IMR-90 (cell line): ENCODE measurements at regions of chr19 and their contacts with region 1.

Region 1: DNA sequence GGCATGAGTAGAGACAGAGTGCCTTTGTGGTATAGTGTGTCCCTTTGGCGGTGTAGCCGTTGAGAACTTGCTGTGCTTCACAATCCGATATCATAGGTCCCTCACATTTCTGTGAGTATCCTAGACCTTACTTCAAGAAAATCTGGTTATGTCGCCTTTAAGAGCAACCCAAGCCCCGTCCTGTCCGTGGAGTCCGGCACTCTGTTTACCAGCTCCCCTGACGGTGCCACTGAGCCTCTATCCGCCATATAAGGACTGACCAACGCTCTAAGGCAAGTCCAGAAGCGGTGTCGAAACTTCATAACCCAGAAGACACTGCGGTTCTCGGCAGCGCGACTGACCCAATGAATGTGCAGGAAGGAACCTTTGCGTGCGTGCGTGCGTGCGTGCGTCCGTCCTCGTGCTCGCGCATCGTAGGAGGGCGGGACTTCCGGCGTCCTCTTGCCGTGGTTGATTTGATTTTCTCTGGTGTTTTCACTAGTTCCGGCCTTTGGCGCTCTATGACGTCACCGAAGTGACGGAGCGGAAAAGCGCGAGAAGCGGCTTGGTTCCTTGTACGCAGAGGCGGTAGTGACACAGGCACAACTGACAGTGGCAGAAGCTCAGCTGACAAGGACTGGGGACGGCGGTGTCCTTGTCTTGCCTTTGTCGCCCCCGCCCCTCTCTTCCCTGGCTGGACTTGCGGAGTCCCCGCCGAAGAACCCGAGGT is at the starts of genes TRAPPC2B and ZNF547:
- DNase-seq: peak; percentile 100
- ATAC-seq: peak; percentile 97
- H3K4me3 ChIP-seq: peak within 1 kb of the TSS; percentile 61
- H3K27ac ChIP-seq: peak within 1 kb of the TSS; percentile 76
- H3K4me1 ChIP-seq: no peaks in the 10 kb centered on the region
- H3K27me3 ChIP-seq: no peaks in the 10 kb centered on the region
- CTCF ChIP-seq: no peak
- POLR2A ChIP-seq: peak; percentile 88
- RAD21 ChIP-seq: no peak
- total RNA-seq, gene TRAPPC2B: 14.4 and 20.4 TPM in 2 replicates
- total RNA-seq, gene ZNF547: 4.4 and 5.6 TPM in 2 replicates

Region 2: GRCh38 chr19:57320180-57321084 is 42.7 kb before region 1 on chr19 and contains the start of gene ZNF543:
- CTCF ChIA-PET with region 1: no interaction called
- POLR2A ChIA-PET with region 1: no interaction called
- dilution Hi-C with region 1: no loop called
- in situ Hi-C with region 1: no loop called
- intact Hi-C with region 1: loop called (anchors 1 kb)
- DNase-seq: peak; percentile 95
- ATAC-seq: peak; percentile 99
- H3K4me3 ChIP-seq: peak within 1 kb of the TSS; percentile 78
- H3K27ac ChIP-seq: peak within 1 kb of the TSS; percentile 87
- H3K4me1 ChIP-seq: peaks cover 11% of the 10 kb centered on the region
- H3K27me3 ChIP-seq: peaks cover 10% of the 10 kb centered on the region
- CTCF ChIP-seq: no peak
- POLR2A ChIP-seq: peak; percentile 74; the same call in 1 of the 2 replicates
- RAD21 ChIP-seq: peak; percentile 12; the same call in 1 of the 2 replicates
- total RNA-seq, gene ZNF543: 8.3 and 9.0 TPM in 2 replicates

Region 3: GRCh38 chr19:57759096-57759495 is 395.9 kb after region 1 on chr19:
- CTCF ChIA-PET with region 1: no interaction called
- POLR2A ChIA-PET with region 1: interaction called, 11 read pairs
- dilution Hi-C with region 1: no loop called
- in situ Hi-C with region 1: no loop called
- intact Hi-C with region 1: no loop called
- DNase-seq: no peak
- ATAC-seq: no peak
- H3K4me3 ChIP-seq: no peak overlapping the region
- H3K27ac ChIP-seq: no peak overlapping the region
- H3K4me1 ChIP-seq: no peaks in the 10 kb centered on the region
- H3K27me3 ChIP-seq: no peaks in the 10 kb centered on the region
- CTCF ChIP-seq: no peak
- POLR2A ChIP-seq: no peak
- RAD21 ChIP-seq: no peak